Caki2 (cell line): ENCODE measurements at regions of chr17 and their contacts with region 1.

Region 1: DNA sequence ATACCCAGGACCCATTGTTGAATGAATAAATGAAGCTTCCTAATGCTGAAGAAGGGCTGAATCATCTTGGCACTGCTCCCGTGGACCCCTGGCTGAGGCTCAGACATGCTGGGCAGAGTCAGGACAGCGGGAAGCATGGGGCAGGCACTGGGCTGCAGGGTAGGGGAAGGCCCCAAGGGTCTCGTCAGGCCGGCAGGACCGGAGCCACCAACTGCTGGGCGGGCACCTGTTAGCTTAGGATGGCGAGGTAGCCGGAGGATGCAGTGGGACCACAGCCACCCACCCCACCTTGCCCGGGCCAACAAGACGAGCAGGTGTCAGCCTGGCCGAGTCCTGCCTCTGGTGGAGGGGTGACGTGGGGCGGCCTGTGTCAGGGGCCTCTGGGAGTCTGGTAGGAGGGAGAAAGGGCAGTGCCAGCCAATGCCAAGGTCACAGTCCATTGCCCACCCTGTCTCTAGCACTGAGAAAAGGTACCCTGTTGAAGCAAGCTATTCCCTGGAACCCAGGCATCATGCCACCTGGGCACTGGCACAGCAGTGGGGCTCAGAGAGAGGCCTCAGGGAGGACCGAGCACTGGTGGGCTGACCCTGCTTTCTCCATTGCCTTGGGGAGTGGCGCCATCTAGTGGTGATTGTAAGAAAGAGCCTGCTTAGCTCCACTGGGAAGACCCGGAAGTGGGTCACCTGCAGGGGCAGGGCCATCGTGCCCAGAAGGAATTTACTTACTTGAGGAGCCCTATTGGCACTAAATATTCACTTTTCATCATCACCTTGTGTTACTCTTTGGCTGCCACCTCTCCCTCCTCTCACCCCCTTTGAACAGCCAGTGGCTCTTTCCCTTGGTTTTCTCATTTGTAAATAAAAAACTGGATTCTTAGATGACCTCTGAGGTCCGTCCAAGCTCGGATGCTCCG is 3.0 kb upstream of the DLX3 start:
- DNase-seq: peak; percentile 71

Region 2: DNA sequence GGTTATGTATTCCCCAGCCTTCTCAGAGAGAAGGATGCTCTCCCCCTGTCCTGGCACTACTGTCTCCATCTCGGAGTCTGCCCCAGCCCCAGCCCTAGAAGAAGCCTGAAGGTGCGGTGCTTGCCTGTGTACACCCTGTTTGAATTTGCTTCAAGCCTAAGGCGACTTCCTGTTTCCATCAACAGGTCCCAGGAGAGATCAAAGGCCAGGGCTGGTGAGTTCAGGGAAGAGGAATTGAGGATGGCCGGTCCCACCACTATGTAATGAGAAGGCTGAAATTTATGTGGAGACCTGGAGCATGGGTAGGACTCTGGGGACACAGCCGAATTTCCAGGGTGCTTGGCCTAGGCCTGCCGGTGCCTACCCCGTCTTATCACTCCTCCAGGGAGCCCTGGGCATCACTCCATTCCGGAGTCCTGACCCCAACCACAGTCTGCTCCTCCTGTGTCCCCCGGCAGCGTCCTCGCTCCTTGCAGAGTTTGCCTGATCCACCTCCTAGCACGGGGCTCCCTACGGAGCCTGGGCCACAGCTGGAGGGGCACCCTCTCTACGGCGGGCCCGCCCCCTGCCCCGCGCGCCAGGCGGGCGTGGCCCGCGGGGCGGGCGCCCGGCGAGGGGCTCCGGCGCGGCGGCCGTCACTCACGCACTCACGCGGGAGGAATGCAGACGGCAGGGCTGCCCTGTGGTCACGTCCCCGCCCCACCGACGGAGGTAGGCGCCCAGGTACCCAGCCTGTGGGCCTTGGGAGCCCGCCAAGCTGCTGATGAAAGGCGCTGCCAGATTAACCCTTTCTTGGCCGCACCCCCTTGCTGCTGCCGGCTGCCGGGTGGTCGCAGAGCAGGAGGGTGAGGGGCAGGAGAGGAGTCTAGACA is 96.4 kb before region 1 on chr17:
- in situ Hi-C with region 1: loop called (anchors 10 kb)
- DNase-seq: no peak

Region 3: DNA sequence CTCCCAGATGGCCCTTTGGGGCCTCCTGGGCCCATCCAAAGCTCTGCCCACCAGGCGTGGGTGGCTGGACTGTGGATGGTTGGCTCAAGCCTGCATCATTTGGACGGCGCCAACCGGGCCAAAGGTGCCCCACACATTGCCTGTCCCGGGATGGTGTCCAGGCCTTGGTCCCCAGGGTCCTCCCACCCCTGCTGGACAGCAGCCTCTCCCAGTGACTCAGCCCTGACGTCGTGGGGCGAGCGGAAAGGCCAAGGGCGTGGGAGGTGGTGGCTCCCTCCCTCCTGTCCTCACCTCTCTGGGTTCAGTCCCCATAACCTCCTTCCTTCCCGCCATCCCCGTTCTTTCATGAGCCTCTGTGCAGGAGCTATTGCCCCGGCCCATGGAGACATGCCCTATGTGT is 71.2 kb before region 1 on chr17:
- in situ Hi-C with region 1: no loop called
- DNase-seq: no peak

Region 4: GRCh38 chr17:49944273-49944890 is 53.7 kb before region 1 on chr17:
- in situ Hi-C with region 1: no loop called
- DNase-seq: no peak

Region 5: DNA sequence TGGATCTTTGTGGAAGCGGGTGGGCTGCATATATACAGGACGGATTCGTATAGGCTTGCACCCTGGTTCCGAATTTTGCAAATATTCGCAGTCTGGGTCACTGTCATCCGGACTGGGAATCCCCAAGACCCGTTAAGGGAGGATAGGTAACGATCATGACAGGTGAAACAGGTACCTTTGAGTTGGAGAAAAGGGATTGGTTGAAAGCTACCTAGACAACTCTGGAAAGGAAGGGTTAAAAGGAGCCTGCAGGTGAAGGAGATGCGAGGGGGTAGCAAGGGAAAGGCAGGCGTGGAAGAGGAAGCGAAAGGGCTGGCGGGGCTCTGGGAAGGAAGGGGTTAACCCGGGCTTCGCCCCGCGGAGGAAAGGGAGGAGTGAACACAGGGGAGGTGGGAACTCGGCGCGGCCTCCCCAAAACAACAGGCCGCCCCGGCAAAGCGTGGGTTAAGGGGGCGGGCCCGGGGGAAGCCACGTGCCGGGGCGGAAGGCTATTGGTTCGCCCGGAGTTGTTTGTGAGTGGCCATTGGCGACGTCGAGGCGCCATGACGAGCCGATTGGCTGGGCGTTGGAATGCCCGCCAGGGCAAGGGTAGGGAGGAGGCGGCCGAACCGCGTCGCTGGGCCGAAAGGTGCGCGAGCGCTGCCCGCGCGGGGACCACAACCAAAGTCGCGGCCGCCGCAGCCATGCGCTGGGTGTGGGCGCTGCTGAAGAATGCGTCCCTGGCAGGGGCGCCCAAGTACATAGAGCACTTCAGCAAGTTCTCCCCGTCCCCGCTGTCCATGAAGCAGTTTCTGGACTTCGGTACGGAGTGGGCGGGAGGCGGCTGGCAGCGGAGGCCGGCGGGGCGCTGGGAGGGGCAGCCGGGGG is 96.9 kb after region 1 on chr17 and contains the start of gene PDK2:
- in situ Hi-C with region 1: no loop called
- DNase-seq: peak; percentile 95
- total RNA-seq, gene PDK2: 17.8 and 58.4 TPM in 2 replicates